Naive thymus-derived CD4-positive, alpha-beta T cell (primary cell): ENCODE measurements at regions of chr17 and their contacts with region 1.

Region 1: DNA sequence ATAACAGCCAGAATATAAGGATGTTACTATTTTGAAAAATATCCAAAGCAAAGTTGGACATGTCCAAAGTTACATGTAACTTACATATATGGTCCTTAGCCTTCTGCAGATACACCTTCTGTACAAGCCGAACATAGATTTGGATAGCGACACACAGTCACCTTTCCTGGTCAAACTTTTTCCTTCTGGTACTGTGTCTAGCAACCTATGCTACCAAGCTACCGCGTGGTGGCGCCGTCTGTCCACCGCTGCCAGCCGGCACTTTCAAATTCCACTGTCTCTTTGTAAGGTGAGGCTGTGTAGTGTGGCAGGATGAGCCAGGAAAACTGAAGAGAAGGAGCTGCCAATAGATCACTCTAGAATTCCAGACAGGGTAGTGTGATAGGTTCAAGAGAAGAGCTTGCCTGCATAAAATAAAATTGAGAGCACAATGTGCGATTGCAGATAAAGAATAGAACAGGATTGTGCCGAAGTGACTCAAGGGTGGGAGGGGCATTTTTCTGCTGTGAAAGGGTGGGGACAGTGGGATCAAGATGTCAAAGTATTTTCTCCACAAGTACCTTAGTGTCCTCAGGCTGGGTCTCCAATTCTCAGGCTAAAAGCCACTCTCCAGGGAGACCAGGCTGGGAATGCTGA is 366.9 kb downstream of the SLC39A11 start:
- DNase-seq: peak in 7 of 9 donors; percentile 22 to 57 (median 41)
- ATAC-seq: peak; percentile 60
- H3K4me3 ChIP-seq: no peak overlapping the region
- H3K4me3 Mint-ChIP-seq: peak overlapping the region in 9 of 10 donors; percentile 3 to 82 (median 48)
- H3K27ac ChIP-seq: no peak overlapping the region
- H3K27ac Mint-ChIP-seq: peak overlapping the region; percentile 76 to 97 (median 87)
- H3K4me1 ChIP-seq: peaks cover 10 to 26% of the 10 kb centered on the region in 2 donors
- H3K4me1 Mint-ChIP-seq: peaks cover 27 to 61% (median 30%) of the 10 kb centered on the region in 7 donors
- H3K27me3 ChIP-seq: no peaks in the 10 kb centered on the region
- H3K27me3 Mint-ChIP-seq: no peaks in the 10 kb centered on the region

Region 2: GRCh38 chr17:72465191-72466024 is 260.1 kb before region 1 on chr17:
- CTCF ChIA-PET with region 1: no interaction called
- POLR2A ChIA-PET with region 1: no interaction called
- intact Hi-C with region 1: no loop called
- DNase-seq: no peak
- ATAC-seq: no peak
- H3K4me3 ChIP-seq: no peak overlapping the region
- H3K4me3 Mint-ChIP-seq: no peak overlapping the region
- H3K27ac ChIP-seq: no peak overlapping the region
- H3K27ac Mint-ChIP-seq: no peak overlapping the region
- H3K4me1 ChIP-seq: no peaks in the 10 kb centered on the region
- H3K4me1 Mint-ChIP-seq: no peaks in the 10 kb centered on the region
- H3K27me3 ChIP-seq: no peaks in the 10 kb centered on the region
- H3K27me3 Mint-ChIP-seq: peaks cover 0 to 19% (median 4%) of the 10 kb centered on the region in 5 donors

Region 3: GRCh38 chr17:72710834-72711233 is 14.7 kb before region 1 on chr17:
- CTCF ChIA-PET with region 1: interaction called, 10 read pairs
- POLR2A ChIA-PET with region 1: no interaction called
- intact Hi-C with region 1: loop called in 1 of 2 experiments (anchors 1 kb)
- DNase-seq: no peak
- ATAC-seq: no peak
- H3K4me3 ChIP-seq: no peak overlapping the region
- H3K4me3 Mint-ChIP-seq: peak overlapping the region in 2 of 10 donors; percentile 45 to 74
- H3K27ac ChIP-seq: no peak overlapping the region
- H3K27ac Mint-ChIP-seq: peak overlapping the region in 2 of 9 donors; percentile 34 to 91
- H3K4me1 ChIP-seq: no peaks in the 10 kb centered on the region
- H3K4me1 Mint-ChIP-seq: peaks cover 11 to 68% (median 23%) of the 10 kb centered on the region in 7 donors
- H3K27me3 ChIP-seq: no peaks in the 10 kb centered on the region
- H3K27me3 Mint-ChIP-seq: no peaks in the 10 kb centered on the region

Region 4: GRCh38 chr17:73156166-73156840 is 430.8 kb after region 1 on chr17:
- CTCF ChIA-PET with region 1: interaction called, 52 read pairs
- POLR2A ChIA-PET with region 1: no interaction called
- intact Hi-C with region 1: loop called (anchors 1 kb)
- DNase-seq: peak in 8 of 9 donors; percentile 11 to 64 (median 45)
- ATAC-seq: peak; percentile 89
- H3K4me3 ChIP-seq: no peak overlapping the region
- H3K4me3 Mint-ChIP-seq: no peak overlapping the region
- H3K27ac ChIP-seq: no peak overlapping the region
- H3K27ac Mint-ChIP-seq: peak overlapping the region in 1 of 9 donors; percentile 33
- H3K4me1 ChIP-seq: no peaks in the 10 kb centered on the region
- H3K4me1 Mint-ChIP-seq: peaks cover 0 to 14% (median 7%) of the 10 kb centered on the region in 7 donors
- H3K27me3 ChIP-seq: no peaks in the 10 kb centered on the region
- H3K27me3 Mint-ChIP-seq: peaks cover 14 to 19% (median 17%) of the 10 kb centered on the region in 5 donors

Region 5: GRCh38 chr17:73255671-73256181 is 530.2 kb after region 1 on chr17:
- CTCF ChIA-PET with region 1: interaction called, 19 read pairs
- POLR2A ChIA-PET with region 1: no interaction called
- intact Hi-C with region 1: loop called (anchors 1 to 5 kb)
- DNase-seq: peak in 7 of 9 donors; percentile 38 to 63 (median 48)
- ATAC-seq: peak; percentile 75
- H3K4me3 ChIP-seq: no peak overlapping the region
- H3K4me3 Mint-ChIP-seq: no peak overlapping the region
- H3K27ac ChIP-seq: no peak overlapping the region
- H3K27ac Mint-ChIP-seq: no peak overlapping the region
- H3K4me1 ChIP-seq: no peaks in the 10 kb centered on the region
- H3K4me1 Mint-ChIP-seq: peaks cover 0 to 4% (median 0%) of the 10 kb centered on the region in 7 donors
- H3K27me3 ChIP-seq: no peaks in the 10 kb centered on the region
- H3K27me3 Mint-ChIP-seq: no peaks in the 10 kb centered on the region

Region 6: GRCh38 chr17:73429440-73430164 is 704.1 kb after region 1 on chr17:
- CTCF ChIA-PET with region 1: interaction called, 3 read pairs
- POLR2A ChIA-PET with region 1: no interaction called
- intact Hi-C with region 1: loop called in 1 of 2 experiments (anchors 1 kb)
- DNase-seq: peak; percentile 68 to 90 (median 82)
- ATAC-seq: peak; percentile 96
- H3K4me3 ChIP-seq: no peak overlapping the region
- H3K4me3 Mint-ChIP-seq: peak overlapping the region in 7 of 10 donors; percentile 27 to 64 (median 37)
- H3K27ac ChIP-seq: no peak overlapping the region
- H3K27ac Mint-ChIP-seq: peak overlapping the region in 3 of 9 donors; percentile 1 to 55 (median 17)
- H3K4me1 ChIP-seq: no peaks in the 10 kb centered on the region
- H3K4me1 Mint-ChIP-seq: peaks cover 0 to 17% (median 15%) of the 10 kb centered on the region in 7 donors
- H3K27me3 ChIP-seq: no peaks in the 10 kb centered on the region
- H3K27me3 Mint-ChIP-seq: peaks cover 0 to 2% (median 0%) of the 10 kb centered on the region in 5 donors

Region 7: DNA sequence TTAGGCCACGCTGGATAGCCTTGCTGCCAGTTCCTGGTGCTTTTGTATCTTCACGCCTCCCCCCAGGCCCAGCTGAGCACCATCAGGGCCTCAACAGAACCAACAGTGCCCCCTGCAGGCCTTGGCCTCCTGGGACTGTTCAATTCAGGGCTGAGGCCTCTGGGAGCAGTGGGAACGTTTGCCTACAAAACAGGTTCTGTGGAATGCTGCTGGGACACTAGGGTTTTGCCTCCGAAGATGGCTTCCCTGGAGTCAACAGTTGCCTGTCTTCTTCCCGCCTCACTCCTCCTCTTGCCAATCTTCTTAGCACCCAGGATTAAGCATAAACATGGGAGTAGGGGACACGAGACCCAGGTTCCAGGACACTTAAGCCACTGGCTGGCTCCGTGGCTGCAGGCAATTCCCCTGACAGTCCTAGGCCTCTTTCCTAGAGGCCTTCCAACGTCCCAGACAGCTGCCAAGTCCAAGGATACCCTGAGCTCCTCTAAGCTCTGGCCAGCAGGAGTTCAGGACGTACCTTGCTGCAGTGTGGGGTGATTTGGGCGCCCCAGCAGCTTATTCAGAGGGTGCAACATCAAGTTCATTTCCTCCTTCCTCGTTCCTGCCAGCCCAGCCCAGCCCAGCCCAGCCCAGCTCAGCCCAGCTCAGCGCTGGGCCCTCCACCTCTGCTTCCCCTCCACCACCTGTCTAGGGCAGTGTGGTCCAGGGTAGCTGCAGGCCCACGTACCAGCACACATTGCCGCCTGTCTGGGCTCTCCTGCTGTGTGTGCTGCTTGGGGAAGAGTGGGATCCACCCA is 1231.3 kb after region 1 on chr17:
- CTCF ChIA-PET with region 1: interaction called, 4 read pairs
- POLR2A ChIA-PET with region 1: no interaction called
- intact Hi-C with region 1: loop called in 1 of 2 experiments (anchors 2 kb)
- DNase-seq: peak; percentile 18 to 65 (median 49)
- ATAC-seq: peak; percentile 70
- H3K4me3 ChIP-seq: no peak overlapping the region
- H3K4me3 Mint-ChIP-seq: no peak overlapping the region
- H3K27ac ChIP-seq: no peak overlapping the region
- H3K27ac Mint-ChIP-seq: no peak overlapping the region
- H3K4me1 ChIP-seq: no peaks in the 10 kb centered on the region
- H3K4me1 Mint-ChIP-seq: peaks cover 0 to 4% (median 0%) of the 10 kb centered on the region in 7 donors
- H3K27me3 ChIP-seq: no peaks in the 10 kb centered on the region
- H3K27me3 Mint-ChIP-seq: peaks cover 3 to 7% (median 4%) of the 10 kb centered on the region in 5 donors